ENCODE measurements at regions of chr1 and their contacts with region 1.

Region 1: GRCh38 chr1:43946236-43947060 is at the start of gene IPO13:
- DNase-seq: peak; percentile 89 to 97 (median 94)
- ATAC-seq: peak; percentile 95
- H3K4me3 ChIP-seq: peak within 1 kb of the TSS; percentile 90 to 98
- H3K4me3 Mint-ChIP-seq: peak within 1 kb of the TSS; percentile 88
- H3K27ac ChIP-seq: peak within 1 kb of the TSS; percentile 92 to 99
- H3K27ac Mint-ChIP-seq: peak within 1 kb of the TSS; percentile 96
- H3K4me1 ChIP-seq: peaks cover 22% of the 10 kb centered on the region
- H3K4me1 Mint-ChIP-seq: peaks cover 63% of the 10 kb centered on the region
- H3K27me3 ChIP-seq: no peaks in the 10 kb centered on the region
- H3K27me3 Mint-ChIP-seq: no peaks in the 10 kb centered on the region
- CTCF ChIP-seq: peak; percentile 54
- total RNA-seq, gene IPO13: 6.5 to 8.1 TPM

Region 2: DNA sequence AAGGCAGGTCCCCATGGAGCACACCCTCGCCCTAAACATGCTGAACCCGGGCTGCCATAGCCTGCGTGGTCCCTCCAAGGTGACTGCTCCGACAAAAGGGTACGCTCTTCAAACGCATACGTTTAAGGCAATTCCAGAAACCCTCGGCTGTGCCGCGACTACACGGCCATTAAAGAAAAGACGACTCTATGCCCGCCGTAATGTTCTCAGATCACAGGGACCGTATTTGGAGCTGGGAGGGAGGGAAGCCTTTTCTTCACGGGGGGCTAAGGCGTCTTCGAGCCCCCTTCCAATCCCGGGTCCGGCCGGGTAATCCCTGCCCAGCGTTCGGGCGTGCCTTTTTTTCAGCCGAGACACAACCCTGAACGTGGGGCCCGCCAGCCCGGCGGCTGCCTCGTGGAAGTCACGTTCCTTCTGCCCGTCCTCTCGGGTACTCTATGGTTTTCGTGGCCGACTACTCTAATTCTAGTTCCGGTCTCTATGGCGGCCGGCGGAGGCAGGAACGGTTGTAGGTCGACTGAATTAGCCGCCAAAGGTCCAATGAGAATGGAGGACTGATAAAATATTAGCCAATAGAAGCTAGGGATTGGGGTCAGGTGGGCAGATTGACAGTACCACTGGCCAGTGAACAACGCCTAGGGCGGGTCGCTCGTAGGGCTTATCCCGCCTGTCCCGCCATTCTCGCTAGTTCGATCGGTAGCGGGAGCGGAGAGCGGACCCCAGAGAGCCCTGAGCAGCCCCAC is 1264.5 kb before region 1 on chr1 and contains the start of gene YBX1:
- CTCF ChIA-PET with region 1: no interaction called
- POLR2A ChIA-PET with region 1: no interaction called
- intact Hi-C with region 1: loop called in 1 of 2 experiments (anchors 5 kb)
- DNase-seq: peak; percentile 88 to 98 (median 95)
- ATAC-seq: peak; percentile 89
- H3K4me3 ChIP-seq: peak within 1 kb of the TSS; percentile 81 to 84
- H3K4me3 Mint-ChIP-seq: peak within 1 kb of the TSS; percentile 99
- H3K27ac ChIP-seq: peak within 1 kb of the TSS; percentile 82 to 88
- H3K27ac Mint-ChIP-seq: peak within 1 kb of the TSS; percentile 97
- H3K4me1 ChIP-seq: peaks cover 43% of the 10 kb centered on the region
- H3K4me1 Mint-ChIP-seq: peaks cover 58% of the 10 kb centered on the region
- H3K27me3 ChIP-seq: no peaks in the 10 kb centered on the region
- H3K27me3 Mint-ChIP-seq: no peaks in the 10 kb centered on the region
- CTCF ChIP-seq: no peak
- total RNA-seq, gene YBX1: 440 to 450 TPM

Region 3: GRCh38 chr1:43358746-43359693 is 587.4 kb before region 1 on chr1 and contains the start of gene CDC20:
- CTCF ChIA-PET with region 1: no interaction called
- POLR2A ChIA-PET with region 1: no interaction called
- intact Hi-C with region 1: loop called (anchors 1 to 10 kb)
- DNase-seq: peak; percentile 93 to 99 (median 97)
- ATAC-seq: peak; percentile 98
- H3K4me3 ChIP-seq: peak within 1 kb of the TSS; percentile 79 to 92
- H3K4me3 Mint-ChIP-seq: peak within 1 kb of the TSS; percentile 89
- H3K27ac ChIP-seq: peak within 1 kb of the TSS; percentile 62 to 76
- H3K27ac Mint-ChIP-seq: peak within 1 kb of the TSS; percentile 87
- H3K4me1 ChIP-seq: peaks cover 12% of the 10 kb centered on the region
- H3K4me1 Mint-ChIP-seq: peaks cover 15% of the 10 kb centered on the region
- H3K27me3 ChIP-seq: no peaks in the 10 kb centered on the region
- H3K27me3 Mint-ChIP-seq: no peaks in the 10 kb centered on the region
- CTCF ChIP-seq: no peak
- total RNA-seq, gene CDC20: 0.92 to 1.3 TPM

Region 4: GRCh38 chr1:43639976-43640789 is 306.3 kb before region 1 on chr1:
- CTCF ChIA-PET with region 1: no interaction called
- POLR2A ChIA-PET with region 1: no interaction called
- intact Hi-C with region 1: no loop called
- DNase-seq: no peak
- ATAC-seq: no peak
- H3K4me3 ChIP-seq: no peak overlapping the region
- H3K4me3 Mint-ChIP-seq: no peak overlapping the region
- H3K27ac ChIP-seq: no peak overlapping the region
- H3K27ac Mint-ChIP-seq: no peak overlapping the region
- H3K4me1 ChIP-seq: no peaks in the 10 kb centered on the region
- H3K4me1 Mint-ChIP-seq: no peaks in the 10 kb centered on the region
- H3K27me3 ChIP-seq: no peaks in the 10 kb centered on the region
- H3K27me3 Mint-ChIP-seq: peaks cover 7% of the 10 kb centered on the region
- CTCF ChIP-seq: no peak

Region 5: GRCh38 chr1:43706598-43707495 is 239.6 kb before region 1 on chr1:
- CTCF ChIA-PET with region 1: no interaction called
- POLR2A ChIA-PET with region 1: no interaction called
- intact Hi-C with region 1: loop called (anchors 1 to 2 kb)
- DNase-seq: peak; percentile 74 to 94 (median 89)
- ATAC-seq: peak; percentile 98
- H3K4me3 ChIP-seq: peak overlapping the region; percentile 80 to 84
- H3K4me3 Mint-ChIP-seq: peak overlapping the region; percentile 87
- H3K27ac ChIP-seq: peak overlapping the region; percentile 46 to 58
- H3K27ac Mint-ChIP-seq: peak overlapping the region; percentile 81
- H3K4me1 ChIP-seq: peaks cover 13% of the 10 kb centered on the region
- H3K4me1 Mint-ChIP-seq: peaks cover 30% of the 10 kb centered on the region
- H3K27me3 ChIP-seq: no peaks in the 10 kb centered on the region
- H3K27me3 Mint-ChIP-seq: no peaks in the 10 kb centered on the region
- CTCF ChIP-seq: no peak

Region 6: GRCh38 chr1:43934101-43934985 is 12.1 kb before region 1 on chr1:
- CTCF ChIA-PET with region 1: interaction called, 21 read pairs
- POLR2A ChIA-PET with region 1: interaction called, 4 read pairs
- intact Hi-C with region 1: no loop called
- DNase-seq: peak; percentile 24 to 68 (median 50)
- ATAC-seq: peak; percentile 69
- H3K4me3 ChIP-seq: no peak overlapping the region
- H3K4me3 Mint-ChIP-seq: no peak overlapping the region
- H3K27ac ChIP-seq: no peak overlapping the region
- H3K27ac Mint-ChIP-seq: no peak overlapping the region
- H3K4me1 ChIP-seq: peaks cover 14% of the 10 kb centered on the region
- H3K4me1 Mint-ChIP-seq: peaks cover 15% of the 10 kb centered on the region
- H3K27me3 ChIP-seq: peaks cover 23 to 27% of the 10 kb centered on the region in 2 experiments
- H3K27me3 Mint-ChIP-seq: peaks cover 29% of the 10 kb centered on the region
- CTCF ChIP-seq: peak; percentile 65

Region 7: DNA sequence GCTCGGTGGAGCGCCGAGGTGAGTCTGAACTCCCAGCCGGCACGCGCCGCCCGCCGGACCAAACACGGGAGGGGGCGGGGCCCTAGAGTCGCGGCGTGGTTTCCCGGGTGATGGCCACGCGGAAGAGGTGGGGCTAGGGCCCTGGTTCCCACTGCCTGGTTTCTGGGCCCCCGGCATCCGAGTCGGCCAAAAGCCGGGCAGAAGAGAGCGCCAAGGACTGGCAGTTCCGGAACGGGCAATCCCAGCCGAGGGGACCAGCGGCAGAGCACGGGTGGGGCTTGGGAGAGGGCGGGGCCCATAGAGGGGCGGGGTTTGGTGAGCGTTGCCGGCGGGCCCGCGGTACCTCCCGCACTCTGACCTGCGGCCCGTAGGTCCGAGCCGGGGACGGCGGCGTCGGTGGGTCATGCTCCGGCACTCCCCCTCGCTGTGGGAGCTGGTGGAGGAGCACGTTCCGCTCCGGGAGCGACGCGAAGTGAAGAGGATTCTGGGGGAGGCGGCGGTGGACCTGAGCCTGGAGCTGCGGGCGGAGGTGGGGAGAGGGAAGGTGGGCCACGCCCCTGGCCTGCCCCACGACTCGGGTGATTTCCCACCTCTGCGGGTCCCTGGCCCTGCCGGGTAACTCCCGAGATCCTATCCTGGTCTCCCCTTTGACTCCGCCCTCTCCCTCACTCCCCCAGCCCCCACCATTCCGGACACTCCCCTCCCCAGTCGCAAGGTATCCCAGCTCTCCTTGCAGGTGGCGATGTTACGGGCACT is 45.2 kb after region 1 on chr1 and contains the start of gene CCDC24:
- CTCF ChIA-PET with region 1: no interaction called
- POLR2A ChIA-PET with region 1: no interaction called
- intact Hi-C with region 1: loop called (anchors 1 kb)
- DNase-seq: peak; percentile 43 to 85 (median 76)
- ATAC-seq: peak; percentile 81
- H3K4me3 ChIP-seq: peak within 1 kb of the TSS; percentile 74 to 81
- H3K4me3 Mint-ChIP-seq: peak within 1 kb of the TSS; percentile 90
- H3K27ac ChIP-seq: peak within 1 kb of the TSS; percentile 33 to 43
- H3K27ac Mint-ChIP-seq: peak within 1 kb of the TSS; percentile 72
- H3K4me1 ChIP-seq: peaks cover 12% of the 10 kb centered on the region
- H3K4me1 Mint-ChIP-seq: peaks cover 8% of the 10 kb centered on the region
- H3K27me3 ChIP-seq: no peaks in the 10 kb centered on the region
- H3K27me3 Mint-ChIP-seq: no peaks in the 10 kb centered on the region
- CTCF ChIP-seq: no peak
- total RNA-seq, gene CCDC24: 0.33 to 0.71 TPM

Region 8: GRCh38 chr1:44354840-44355581 is 408.6 kb after region 1 on chr1 and contains the start of gene ERI3:
- CTCF ChIA-PET with region 1: no interaction called
- POLR2A ChIA-PET with region 1: no interaction called
- intact Hi-C with region 1: loop called in 1 of 2 experiments (anchors 10 kb)
- DNase-seq: peak; percentile 91 to 98 (median 96)
- ATAC-seq: peak; percentile 99
- H3K4me3 ChIP-seq: peak within 1 kb of the TSS; percentile 56 to 64
- H3K4me3 Mint-ChIP-seq: peak within 1 kb of the TSS; percentile 95
- H3K27ac ChIP-seq: peak within 1 kb of the TSS; percentile 37 to 60
- H3K27ac Mint-ChIP-seq: peak within 1 kb of the TSS; percentile 93
- H3K4me1 ChIP-seq: peaks cover 20% of the 10 kb centered on the region
- H3K4me1 Mint-ChIP-seq: peaks cover 38% of the 10 kb centered on the region
- H3K27me3 ChIP-seq: no peaks in the 10 kb centered on the region
- H3K27me3 Mint-ChIP-seq: no peaks in the 10 kb centered on the region
- CTCF ChIP-seq: no peak
- total RNA-seq, gene ERI3: 17.3 to 20.0 TPM